ENCODE measurements at regions of chr7 and their contacts with region 1.

Region 1: GRCh38 chr7:44847508-44847920 is 373 bp downstream of the H2AZ2 start:
- DNase-seq: peak; percentile 85 to 97
- H3K4me3 ChIP-seq: peak overlapping the region; percentile 42
- CTCF ChIP-seq: no peak
- POLR2A ChIP-seq: no peak

Region 2: DNA sequence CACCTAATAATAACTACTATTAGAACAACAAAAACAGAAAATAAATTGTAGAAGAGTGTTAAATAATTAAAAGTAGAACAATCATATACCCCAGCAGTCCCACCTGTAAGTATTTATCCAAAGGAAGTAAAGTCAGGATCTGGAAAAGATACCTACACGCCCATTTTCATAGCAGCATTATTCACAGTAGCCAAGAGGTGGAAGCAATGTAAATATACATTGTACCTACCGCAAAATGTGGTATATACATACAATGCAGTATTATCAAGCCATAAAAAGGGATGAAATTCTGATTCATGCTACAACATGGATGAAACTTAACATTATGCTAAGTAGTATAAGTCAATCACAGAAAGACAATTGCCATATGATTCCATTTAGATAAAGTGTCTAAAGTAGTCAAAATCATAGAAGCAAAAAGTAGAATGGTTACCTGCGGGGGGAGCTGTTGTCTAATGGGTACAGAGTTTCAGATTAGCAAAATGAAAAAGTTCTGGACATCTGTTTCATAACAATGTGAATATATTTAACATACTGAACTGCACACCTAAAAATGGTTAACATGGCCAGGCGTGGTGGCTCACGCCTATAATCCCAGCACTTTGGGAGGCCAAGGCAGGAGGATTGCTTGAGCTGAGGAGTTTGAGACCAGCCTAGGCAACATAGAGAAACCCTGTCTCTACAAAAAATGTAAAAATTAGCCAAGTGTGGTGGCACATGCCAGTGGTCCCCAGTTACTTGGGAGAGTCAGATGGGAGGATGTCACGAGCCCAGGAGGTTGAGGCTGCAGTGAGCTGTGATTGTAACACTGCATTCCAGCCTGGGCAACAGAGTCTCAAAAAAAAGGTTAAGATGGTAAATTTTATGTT is 259.4 kb before region 1 on chr7:
- intact Hi-C with region 1: loop called (anchors 5 kb)
- DNase-seq: peak in 1 of 2 donors; percentile 65
- H3K4me3 ChIP-seq: no peak overlapping the region
- CTCF ChIP-seq: no peak
- POLR2A ChIP-seq: no peak